ENCODE measurements at regions of chr16 and their contacts with region 1.

Region 1: DNA sequence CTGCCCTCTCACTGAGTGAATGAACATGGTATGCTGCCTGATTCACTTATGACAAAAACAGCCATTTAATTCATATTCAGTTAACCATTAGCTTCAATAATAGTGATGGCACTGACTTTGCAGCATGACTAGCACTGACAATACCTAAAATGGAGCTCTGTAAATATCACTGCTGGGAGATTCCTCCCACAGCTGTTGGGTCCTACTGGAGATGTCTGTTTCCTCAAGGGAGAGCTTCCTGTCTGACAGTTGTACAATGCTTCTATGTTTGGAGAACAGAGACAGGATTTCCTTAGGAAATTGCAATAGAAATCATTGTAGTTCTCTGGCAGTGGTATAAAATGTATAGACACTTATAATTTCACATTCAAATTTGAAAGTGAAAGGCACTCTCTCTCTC is 695.9 kb upstream of the CDH8 start:
- DNase-seq: no peak
- H3K4me3 Mint-ChIP-seq: no peak overlapping the region
- H3K27ac Mint-ChIP-seq: no peak overlapping the region
- H3K4me1 Mint-ChIP-seq: no peaks in the 10 kb centered on the region
- H3K27me3 Mint-ChIP-seq: no peaks in the 10 kb centered on the region
- CTCF ChIP-seq: no peak

Region 2: GRCh38 chr16:62700426-62701294 is 31.4 kb before region 1 on chr16:
- CTCF ChIA-PET with region 1: no interaction called
- intact Hi-C with region 1: no loop called
- DNase-seq: no peak
- H3K4me3 Mint-ChIP-seq: no peak overlapping the region
- H3K27ac Mint-ChIP-seq: no peak overlapping the region
- H3K4me1 Mint-ChIP-seq: no peaks in the 10 kb centered on the region
- H3K27me3 Mint-ChIP-seq: no peaks in the 10 kb centered on the region
- CTCF ChIP-seq: no peak

Region 3: GRCh38 chr16:62717026-62717425 is 15.1 kb before region 1 on chr16:
- CTCF ChIA-PET with region 1: interaction called, 10 read pairs
- intact Hi-C with region 1: no loop called
- DNase-seq: no peak
- H3K4me3 Mint-ChIP-seq: no peak overlapping the region
- H3K27ac Mint-ChIP-seq: no peak overlapping the region
- H3K4me1 Mint-ChIP-seq: no peaks in the 10 kb centered on the region
- H3K27me3 Mint-ChIP-seq: no peaks in the 10 kb centered on the region
- CTCF ChIP-seq: no peak

Measured in Calu3 (cell line).